Pancreas (tissue), 10 donors: ENCODE measurements at regions of chr7 and their contacts with region 1.

Region 1: GRCh38 chr7:51350200-51350921 is 33.8 kb upstream of the COBL start:
- DNase-seq: no peak
- ATAC-seq: peak; percentile 51 to 83 (median 70)
- H3K4me3 ChIP-seq: no peak overlapping the region
- H3K27ac ChIP-seq: peak overlapping the region in 2 of 4 donors; percentile 29 to 48
- H3K4me1 ChIP-seq: peaks cover 0 to 8% (median 8%) of the 10 kb centered on the region in 3 donors
- H3K27me3 ChIP-seq: no peaks in the 10 kb centered on the region
- CTCF ChIP-seq: no peak

Region 2: DNA sequence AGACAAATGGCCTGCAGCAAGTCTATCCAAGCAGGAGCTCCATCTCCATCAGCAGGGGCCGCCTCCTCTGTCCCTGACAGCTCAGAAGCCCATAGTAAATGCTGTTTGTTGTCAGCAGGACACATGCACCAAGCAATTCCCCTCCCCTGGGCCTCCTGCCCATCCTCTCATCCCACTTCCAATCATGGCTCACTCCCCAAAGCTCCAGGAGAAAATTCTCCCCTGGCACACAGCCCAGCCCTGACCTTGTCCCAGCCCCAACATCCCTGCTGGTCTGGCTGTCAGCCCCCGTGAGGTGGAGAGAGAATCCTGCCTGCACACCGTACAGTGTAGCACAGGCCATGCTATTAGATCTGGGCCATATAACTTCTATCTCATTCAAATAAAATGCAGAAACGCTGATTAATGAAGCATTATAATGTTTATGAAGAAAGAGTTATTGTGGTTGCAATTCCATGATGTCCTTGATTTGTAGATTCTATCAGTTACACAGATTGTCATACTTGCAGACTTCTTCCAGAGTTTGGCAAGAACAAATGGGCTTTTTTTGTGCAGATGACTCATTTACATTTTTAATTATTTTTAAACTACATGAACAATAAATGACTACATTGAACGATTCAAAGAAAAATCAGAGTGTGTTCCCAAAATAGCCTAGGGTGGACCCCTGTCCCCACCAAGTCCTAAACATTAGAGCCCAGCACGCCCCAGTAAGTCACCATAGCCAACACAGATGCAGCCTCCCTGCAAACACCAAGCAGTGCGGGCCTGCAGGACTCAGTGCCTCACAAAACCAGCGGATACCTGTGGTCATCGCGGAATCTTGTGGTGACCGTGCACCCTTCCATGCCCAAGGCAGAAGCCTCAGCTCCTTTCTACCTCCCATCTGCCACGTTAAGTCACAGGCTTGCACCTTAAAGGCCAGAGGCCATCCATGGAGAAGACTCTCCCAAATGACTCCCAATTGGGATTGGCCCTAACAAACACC is 103.8 kb before region 1 on chr7:
- intact Hi-C with region 1: loop called in 1 of 3 experiments (anchors 10 kb)
- DNase-seq: peak in 2 of 6 donors; percentile 27 to 44
- ATAC-seq: peak in 2 of 4 donors; percentile 35 to 48
- H3K4me3 ChIP-seq: no peak overlapping the region
- H3K27ac ChIP-seq: no peak overlapping the region
- H3K4me1 ChIP-seq: no peaks in the 10 kb centered on the region
- H3K27me3 ChIP-seq: no peaks in the 10 kb centered on the region
- CTCF ChIP-seq: no peak